ENCODE measurements at regions of chr20 and their contacts with region 1.

Region 1: DNA sequence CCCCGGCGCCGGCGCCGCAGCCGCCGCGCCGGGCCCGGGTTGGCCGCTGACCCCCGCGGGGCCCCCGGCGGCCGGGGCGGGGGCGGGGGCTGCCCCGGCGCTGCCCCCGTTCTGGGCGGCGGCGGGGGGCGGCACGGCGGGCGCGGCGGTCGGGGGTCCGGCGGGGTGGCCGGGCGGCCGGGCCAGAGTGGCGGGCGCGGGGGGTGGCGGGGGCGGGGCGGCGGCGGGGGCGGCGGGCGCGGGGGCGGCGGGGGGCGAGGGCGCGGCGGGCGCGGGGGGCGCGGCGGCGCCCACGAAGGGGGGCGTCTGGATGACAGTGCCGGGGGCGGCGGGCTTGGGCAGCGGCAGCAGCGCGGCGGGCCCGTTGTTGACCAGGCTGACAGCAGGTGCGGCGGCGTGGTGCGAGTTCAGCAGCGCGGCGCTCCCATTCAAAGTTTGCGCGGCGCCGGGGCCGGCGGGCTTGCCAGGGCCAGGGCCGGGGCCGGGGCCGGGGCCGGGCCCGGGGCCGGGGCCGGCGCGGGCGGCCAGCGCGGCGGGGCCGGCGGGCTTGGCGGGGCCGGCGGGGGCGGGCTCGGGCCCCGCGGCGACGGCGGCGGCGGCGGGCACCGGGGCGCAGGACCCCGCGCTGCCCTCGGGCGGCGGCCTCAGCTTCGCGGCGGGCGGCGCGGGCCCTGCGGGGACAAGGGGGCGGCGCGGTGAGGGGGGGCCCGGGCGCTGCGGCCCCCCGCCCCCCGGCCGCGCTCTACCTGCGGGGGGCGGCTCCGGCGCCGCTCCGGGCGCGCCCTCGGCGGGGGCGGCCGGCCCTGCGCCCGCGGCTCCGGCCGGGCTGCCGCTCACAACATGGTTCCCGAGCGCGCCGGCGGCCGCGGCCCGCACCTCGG is 653 bp downstream of the TAF4 start:
- DNase-seq: peak in 2 of 4 donors; percentile 34 to 46
- ATAC-seq: peak; percentile 9
- H3K4me3 ChIP-seq: no peak overlapping the region
- H3K27ac ChIP-seq: peak overlapping the region in 3 of 4 donors; percentile 46 to 76 (median 54)
- H3K4me1 ChIP-seq: peaks cover 51% of the 10 kb centered on the region
- H3K27me3 ChIP-seq: no peaks in the 10 kb centered on the region
- CTCF ChIP-seq: no peak
- POLR2A ChIP-seq: no peak

Region 2: GRCh38 chr20:62117658-62118057 is 52.6 kb after region 1 on chr20:
- intact Hi-C with region 1: loop called (anchors 5 kb)
- DNase-seq: peak in 2 of 4 donors; percentile 23 to 34
- ATAC-seq: no peak
- H3K4me3 ChIP-seq: no peak overlapping the region
- H3K27ac ChIP-seq: no peak overlapping the region
- H3K4me1 ChIP-seq: peaks cover 29% of the 10 kb centered on the region
- H3K27me3 ChIP-seq: no peaks in the 10 kb centered on the region
- CTCF ChIP-seq: no peak
- POLR2A ChIP-seq: no peak

Region 3: DNA sequence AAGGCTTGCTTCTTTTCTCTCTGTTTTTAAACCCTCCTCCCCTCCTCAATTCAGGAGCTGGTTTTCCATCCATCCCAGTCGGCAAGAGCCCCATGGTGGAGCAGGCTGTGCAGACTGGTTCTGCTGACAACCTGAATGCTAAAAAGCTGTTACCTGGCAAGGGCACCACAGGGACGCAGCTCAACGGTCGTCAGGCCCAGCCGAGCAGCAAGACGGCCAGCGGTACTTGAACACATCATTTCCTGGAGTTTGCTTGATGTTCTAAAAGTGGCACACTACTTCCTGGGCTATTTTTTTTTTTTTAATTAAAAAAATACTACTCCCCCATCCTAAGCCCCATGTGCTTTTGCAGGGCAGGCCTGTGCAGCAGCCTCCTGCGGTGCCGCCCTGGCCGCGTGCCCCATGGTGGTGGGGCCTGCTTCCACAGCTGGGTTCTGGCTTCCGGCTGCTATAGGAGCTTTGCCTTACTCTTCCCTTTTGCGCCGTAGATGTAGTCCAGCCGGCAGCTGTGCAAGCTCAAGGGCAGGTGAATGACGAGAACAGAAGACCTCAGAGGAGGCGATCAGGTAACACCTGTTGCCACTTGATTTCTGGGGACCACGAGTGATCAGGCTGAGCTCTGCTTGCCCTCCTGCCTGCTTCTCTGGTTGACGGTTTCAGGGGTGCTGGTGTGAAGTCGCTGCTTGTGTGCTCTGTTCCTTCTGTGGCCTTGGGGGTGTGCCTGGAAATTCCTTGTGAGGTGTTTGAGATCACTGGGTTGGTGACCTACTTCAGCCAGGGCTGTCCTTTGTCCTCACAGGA is 64.9 kb after region 1 on chr20:
- intact Hi-C with region 1: loop called (anchors 5 kb)
- DNase-seq: no peak
- ATAC-seq: no peak
- H3K4me3 ChIP-seq: no peak overlapping the region
- H3K27ac ChIP-seq: no peak overlapping the region
- H3K4me1 ChIP-seq: no peaks in the 10 kb centered on the region
- H3K27me3 ChIP-seq: no peaks in the 10 kb centered on the region
- CTCF ChIP-seq: no peak
- POLR2A ChIP-seq: no peak